HCT116 (cell line): ENCODE measurements at regions of chr2 and their contacts with region 1.

Region 1: GRCh38 chr2:142603759-142604158 is 273.7 kb upstream of the KYNU start:
- DNase-seq: no peak
- ATAC-seq: no peak
- H3K4me3 ChIP-seq: no peak overlapping the region
- H3K27ac ChIP-seq: no peak overlapping the region
- H3K4me1 ChIP-seq: no peaks in the 10 kb centered on the region
- H3K27me3 ChIP-seq: no peaks in the 10 kb centered on the region
- CTCF ChIP-seq: peak; percentile 4 to 48 (median 33); a peak in 4 of 6 replicates
- POLR2A ChIP-seq: no peak
- RAD21 ChIP-seq: peak; percentile 63

Region 2: GRCh38 chr2:142140434-142140845 is 463.3 kb before region 1 on chr2:
- CTCF ChIA-PET with region 1: interaction called, 10 read pairs
- POLR2A ChIA-PET with region 1: no interaction called
- RAD21 ChIA-PET with region 1: no interaction called
- intact Hi-C with region 1: no loop called
- DNase-seq: peak; percentile 19
- ATAC-seq: peak; percentile 58; the same call in 1 of the 2 replicates
- H3K4me3 ChIP-seq: no peak overlapping the region
- H3K27ac ChIP-seq: no peak overlapping the region
- H3K4me1 ChIP-seq: no peaks in the 10 kb centered on the region
- H3K27me3 ChIP-seq: no peaks in the 10 kb centered on the region
- CTCF ChIP-seq: peak; percentile 37 to 62 (median 44); a peak in 4 of 6 replicates
- POLR2A ChIP-seq: no peak
- RAD21 ChIP-seq: peak; percentile 77

Region 3: DNA sequence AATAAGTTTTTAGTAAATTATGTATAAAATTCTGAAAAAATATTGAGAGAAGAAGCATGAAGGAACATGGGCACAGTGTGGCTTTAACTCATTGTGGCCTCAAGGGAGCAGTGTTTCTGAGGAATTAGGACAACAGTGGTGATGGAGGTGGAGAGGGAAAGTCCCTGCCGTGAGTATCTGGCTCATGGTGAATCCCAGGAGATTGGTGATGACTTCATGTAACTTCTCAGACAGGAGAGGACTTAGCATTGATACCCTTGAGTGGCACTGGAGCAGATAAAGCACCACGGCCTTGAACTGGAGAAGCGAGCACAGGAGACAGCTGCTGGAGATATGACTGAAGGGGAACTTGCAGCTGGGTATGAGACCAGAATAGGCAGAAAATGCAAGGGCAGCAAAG is 438.0 kb before region 1 on chr2:
- CTCF ChIA-PET with region 1: interaction called, 16 read pairs
- POLR2A ChIA-PET with region 1: no interaction called
- RAD21 ChIA-PET with region 1: no interaction called
- intact Hi-C with region 1: loop called (anchors 1 kb)
- DNase-seq: peak; percentile 47
- ATAC-seq: peak; percentile 99
- H3K4me3 ChIP-seq: no peak overlapping the region
- H3K27ac ChIP-seq: no peak overlapping the region
- H3K4me1 ChIP-seq: peaks cover 0 to 3% of the 10 kb centered on the region in 2 experiments; a peak in 1 of 4 replicates
- H3K27me3 ChIP-seq: no peaks in the 10 kb centered on the region
- CTCF ChIP-seq: peak; percentile 54 to 62 (median 59); a peak in 5 of 6 replicates
- POLR2A ChIP-seq: no peak
- RAD21 ChIP-seq: peak; percentile 75

Region 4: DNA sequence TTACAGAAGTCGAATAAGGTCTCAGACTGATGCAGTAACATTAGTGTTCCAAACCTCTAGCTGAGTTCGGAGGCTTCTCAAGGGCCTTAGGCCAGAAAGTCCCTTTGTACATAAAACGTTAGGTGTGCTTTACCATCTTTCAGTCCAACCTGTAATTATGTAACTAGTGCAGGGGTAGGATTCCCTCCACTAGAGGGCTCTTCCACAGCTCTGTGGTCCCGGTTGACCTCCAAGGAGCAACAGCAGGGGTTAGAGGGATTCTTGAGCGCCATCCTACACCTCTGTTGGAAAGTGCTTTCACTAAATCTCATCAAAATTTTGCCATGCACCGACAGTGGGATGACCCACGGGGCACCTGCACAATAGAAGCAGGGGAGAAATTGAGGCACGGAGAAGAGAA is 317.2 kb before region 1 on chr2:
- CTCF ChIA-PET with region 1: no interaction called
- POLR2A ChIA-PET with region 1: no interaction called
- RAD21 ChIA-PET with region 1: no interaction called
- intact Hi-C with region 1: loop called (anchors 5 kb)
- DNase-seq: peak; percentile 42
- ATAC-seq: peak; percentile 96
- H3K4me3 ChIP-seq: no peak overlapping the region
- H3K27ac ChIP-seq: no peak overlapping the region
- H3K4me1 ChIP-seq: no peaks in the 10 kb centered on the region; a peak in 1 of 4 replicates
- H3K27me3 ChIP-seq: no peaks in the 10 kb centered on the region
- CTCF ChIP-seq: peak; percentile 54 to 78 (median 77); a peak in 5 of 6 replicates
- POLR2A ChIP-seq: no peak
- RAD21 ChIP-seq: peak; percentile 48